ENCODE measurements at regions of chr9 and their contacts with region 1.

Region 1: DNA sequence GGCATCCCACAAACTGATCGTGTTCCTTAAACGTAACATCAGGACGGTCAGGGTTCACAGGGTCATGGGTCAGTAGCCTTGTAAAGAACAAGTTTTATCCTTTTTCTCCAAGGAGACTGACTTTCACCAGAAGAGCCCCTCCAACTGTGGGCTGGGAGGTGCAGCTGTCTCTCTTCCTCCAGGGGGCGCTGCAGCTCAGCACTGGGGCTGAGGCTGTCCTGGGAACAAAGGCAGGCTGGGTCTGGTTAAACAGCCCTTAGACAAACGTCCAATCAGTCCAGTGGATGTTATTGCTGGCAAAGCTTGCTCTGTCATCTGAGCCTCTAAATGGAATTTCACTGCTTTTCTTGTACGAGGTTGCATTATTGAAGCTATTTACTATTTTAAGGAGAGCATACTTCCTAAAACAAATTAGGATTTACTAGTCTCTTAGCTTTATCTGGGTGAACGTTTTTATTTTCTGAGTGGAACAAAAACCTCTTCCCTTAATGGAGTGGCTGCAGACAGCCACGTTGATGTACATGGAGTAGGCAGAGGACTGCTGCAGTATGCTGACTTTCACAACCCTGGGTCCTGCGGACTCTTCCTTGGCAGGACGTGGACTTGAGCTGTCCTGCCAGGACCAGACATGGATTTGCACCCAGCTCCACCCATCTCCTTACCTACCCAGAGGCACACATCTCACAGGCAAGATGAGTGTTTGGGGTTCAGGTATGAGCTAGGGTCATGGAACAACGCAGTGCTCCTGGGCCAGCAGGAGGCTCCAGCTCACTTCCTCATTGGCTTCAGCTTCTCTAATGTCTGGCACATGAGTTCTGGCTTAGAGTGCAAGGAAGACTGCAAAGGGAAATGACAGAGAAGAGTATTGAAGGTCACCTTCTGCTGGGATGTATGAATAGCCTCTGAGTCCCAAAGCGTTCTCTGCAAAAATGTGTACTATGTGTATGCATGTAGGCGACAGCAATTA is 7.8 kb downstream of the EXOSC2 start:
- DNase-seq: peak; percentile 76
- H3K4me3 Mint-ChIP-seq: no peak overlapping the region
- H3K27ac Mint-ChIP-seq: no peak overlapping the region
- H3K4me1 Mint-ChIP-seq: peaks cover 28% of the 10 kb centered on the region
- H3K27me3 Mint-ChIP-seq: no peaks in the 10 kb centered on the region

Region 2: DNA sequence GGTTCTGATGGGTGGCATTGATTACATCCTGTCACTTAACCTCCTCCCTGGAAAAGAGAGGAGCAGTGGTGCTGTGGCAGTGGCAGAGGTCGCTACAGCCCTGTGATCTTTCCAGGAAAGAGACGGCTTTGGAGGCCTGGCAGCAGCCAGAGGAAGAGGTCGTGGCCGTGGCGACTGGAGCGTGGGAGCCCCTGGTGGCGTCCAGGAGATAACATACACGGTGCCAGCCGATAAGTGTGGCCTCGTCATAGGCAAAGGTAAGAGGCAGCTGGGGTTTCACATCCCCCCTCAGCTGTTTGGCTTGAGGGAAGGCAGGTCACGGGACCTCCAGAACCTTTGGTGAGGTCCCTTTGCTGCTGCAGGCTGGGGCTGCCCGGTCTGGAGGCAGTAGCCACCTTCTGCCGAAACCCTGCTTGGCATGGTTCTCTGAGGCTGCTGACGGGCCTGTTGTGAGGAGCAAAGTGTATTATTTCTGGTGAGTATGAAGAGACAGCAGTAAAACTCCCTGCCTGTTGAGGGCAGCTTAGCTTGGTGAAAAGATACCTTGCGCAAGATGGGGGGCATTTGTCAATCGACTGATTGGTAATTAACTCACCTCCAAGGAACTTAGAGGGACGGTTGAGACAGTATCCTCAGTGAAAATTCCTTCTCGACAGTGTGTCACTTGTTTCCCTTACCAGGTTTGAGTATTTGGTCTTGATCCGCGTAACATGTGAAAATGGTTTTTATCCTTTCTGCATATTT is 74.9 kb before region 1 on chr9:
- CTCF ChIA-PET with region 1: no interaction called
- POLR2A ChIA-PET with region 1: no interaction called
- DNase-seq: no peak
- H3K4me3 Mint-ChIP-seq: no peak overlapping the region
- H3K27ac Mint-ChIP-seq: no peak overlapping the region
- H3K4me1 Mint-ChIP-seq: no peaks in the 10 kb centered on the region
- H3K27me3 Mint-ChIP-seq: no peaks in the 10 kb centered on the region

Region 3: GRCh38 chr9:130682490-130683121 is 18.7 kb before region 1 on chr9:
- CTCF ChIA-PET with region 1: interaction called, 10 read pairs
- POLR2A ChIA-PET with region 1: no interaction called
- DNase-seq: peak; percentile 62
- H3K4me3 Mint-ChIP-seq: peak overlapping the region; percentile 85
- H3K27ac Mint-ChIP-seq: peak overlapping the region; percentile 71
- H3K4me1 Mint-ChIP-seq: peaks cover 9% of the 10 kb centered on the region
- H3K27me3 Mint-ChIP-seq: peaks cover 29% of the 10 kb centered on the region

Region 4: DNA sequence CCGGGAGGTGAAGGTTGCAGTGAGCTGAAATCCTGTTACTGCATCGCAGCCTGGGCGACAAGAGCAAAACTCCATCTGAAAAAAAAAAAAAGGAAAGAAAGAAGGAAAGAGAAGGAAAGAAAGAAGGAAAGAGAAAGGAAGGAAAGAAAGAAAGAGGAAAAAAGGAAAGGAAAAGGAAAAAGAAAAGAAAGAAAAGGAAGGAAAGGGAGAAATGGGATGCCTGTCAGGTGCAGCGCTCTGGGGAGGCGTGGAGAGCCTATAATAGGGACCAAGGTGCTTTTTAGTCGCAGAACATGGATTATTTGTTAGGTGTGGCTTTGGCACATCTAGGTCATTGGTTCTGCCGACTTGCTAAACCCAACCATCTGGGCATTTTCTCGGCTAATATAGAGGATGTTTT is 10.1 kb after region 1 on chr9:
- CTCF ChIA-PET with region 1: interaction called, 21 read pairs
- POLR2A ChIA-PET with region 1: interaction called, 3 read pairs
- DNase-seq: no peak
- H3K4me3 Mint-ChIP-seq: peak overlapping the region; percentile 22
- H3K27ac Mint-ChIP-seq: peak overlapping the region; percentile 72
- H3K4me1 Mint-ChIP-seq: peaks cover 31% of the 10 kb centered on the region
- H3K27me3 Mint-ChIP-seq: no peaks in the 10 kb centered on the region

Region 5: DNA sequence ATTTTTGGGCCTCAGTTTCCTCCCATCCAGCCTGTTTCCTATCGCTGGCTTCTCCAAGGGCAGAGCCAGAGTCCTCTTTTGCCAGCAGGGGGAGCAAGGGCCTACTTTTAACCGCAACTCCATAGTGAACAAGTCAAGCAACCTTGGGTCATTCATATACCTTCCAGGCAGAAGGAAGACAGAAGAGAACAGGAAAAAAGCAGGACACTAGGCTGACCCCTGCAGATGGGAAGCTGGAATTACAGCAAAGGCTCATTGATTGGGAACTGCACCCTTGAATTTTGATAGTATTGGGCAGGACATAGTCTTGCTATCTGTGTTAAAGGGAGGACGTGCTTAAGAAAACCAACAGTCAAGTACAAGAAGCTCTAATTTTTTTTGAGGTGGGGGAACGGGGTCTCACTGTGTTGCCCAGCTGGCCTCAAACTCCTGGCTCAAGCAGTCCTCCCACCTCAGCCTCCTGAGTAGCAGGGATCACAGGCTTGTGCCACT is 165.2 kb after region 1 on chr9:
- CTCF ChIA-PET with region 1: interaction called, 13 read pairs
- POLR2A ChIA-PET with region 1: no interaction called
- DNase-seq: peak; percentile 68
- H3K4me3 Mint-ChIP-seq: no peak overlapping the region
- H3K27ac Mint-ChIP-seq: no peak overlapping the region
- H3K4me1 Mint-ChIP-seq: peaks cover 6% of the 10 kb centered on the region
- H3K27me3 Mint-ChIP-seq: no peaks in the 10 kb centered on the region

Region 6: DNA sequence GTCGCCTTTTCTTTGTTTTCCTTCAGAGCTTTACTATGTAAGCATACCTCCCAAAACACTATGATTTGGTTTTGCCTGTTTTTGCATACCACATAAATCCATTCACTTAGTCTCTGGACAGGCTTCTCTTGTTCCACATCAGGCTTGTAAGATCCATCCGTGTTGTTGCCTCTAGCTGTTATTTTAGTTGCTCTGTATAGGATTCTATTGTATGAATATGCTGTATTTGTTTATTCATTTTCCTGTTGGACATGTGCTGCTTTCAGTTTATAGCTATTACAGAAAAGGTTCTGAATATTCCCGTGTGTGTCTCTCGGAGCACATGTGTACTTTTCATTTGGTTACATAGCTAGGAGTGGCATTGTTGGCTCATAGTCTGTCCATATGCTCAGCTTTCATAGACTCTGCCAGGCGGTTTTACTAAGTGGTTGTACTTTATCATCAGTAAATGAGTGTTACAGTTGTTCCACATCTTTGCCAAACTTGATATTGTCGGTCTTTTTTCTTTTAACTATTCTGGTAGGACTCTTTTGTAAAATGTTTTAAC is 465.9 kb after region 1 on chr9:
- CTCF ChIA-PET with region 1: no interaction called
- POLR2A ChIA-PET with region 1: no interaction called
- DNase-seq: no peak
- H3K4me3 Mint-ChIP-seq: no peak overlapping the region
- H3K27ac Mint-ChIP-seq: peak overlapping the region; percentile 39
- H3K4me1 Mint-ChIP-seq: peaks cover 9% of the 10 kb centered on the region
- H3K27me3 Mint-ChIP-seq: no peaks in the 10 kb centered on the region

Measured in activated CD4-positive, alpha-beta T cell treated with anti-CD3 and anti-CD28 coated beads, Interleukin-2, amount 10 ng/mL, durations not matched to agents 7 days and 5 days (primary cell).